CD4-positive, alpha-beta memory T cell (primary cell): ENCODE measurements at regions of chr17 and their contacts with region 1.

Region 1: GRCh38 chr17:29807520-29808351 is 122.3 kb downstream of the SSH2 start:
- DNase-seq: peak; percentile 62 to 72 (median 66)
- H3K4me3 ChIP-seq: no peak overlapping the region
- H3K4me3 Mint-ChIP-seq: peak overlapping the region in 1 of 8 donors; percentile 10
- H3K27ac ChIP-seq: no peak overlapping the region
- H3K27ac Mint-ChIP-seq: peak overlapping the region in 3 of 7 donors; percentile 23 to 67 (median 47)
- H3K4me1 ChIP-seq: peaks cover 16% of the 10 kb centered on the region
- H3K4me1 Mint-ChIP-seq: peaks cover 13 to 23% (median 20%) of the 10 kb centered on the region in 4 donors
- H3K27me3 ChIP-seq: no peaks in the 10 kb centered on the region
- H3K27me3 Mint-ChIP-seq: no peaks in the 10 kb centered on the region

Region 2: GRCh38 chr17:29579866-29580771 is 227.6 kb before region 1 on chr17:
- CTCF ChIA-PET with region 1: interaction called, 15 read pairs
- POLR2A ChIA-PET with region 1: no interaction called
- intact Hi-C with region 1: no loop called
- DNase-seq: peak; percentile 85 to 91 (median 87)
- H3K4me3 ChIP-seq: no peak overlapping the region
- H3K4me3 Mint-ChIP-seq: peak overlapping the region in 2 of 8 donors; percentile 8 to 65
- H3K27ac ChIP-seq: no peak overlapping the region
- H3K27ac Mint-ChIP-seq: peak overlapping the region; percentile 55 to 90 (median 83)
- H3K4me1 ChIP-seq: peaks cover 18% of the 10 kb centered on the region
- H3K4me1 Mint-ChIP-seq: peaks cover 8 to 31% (median 18%) of the 10 kb centered on the region in 4 donors
- H3K27me3 ChIP-seq: no peaks in the 10 kb centered on the region
- H3K27me3 Mint-ChIP-seq: no peaks in the 10 kb centered on the region

Region 3: GRCh38 chr17:29640413-29640812 is 167.3 kb before region 1 on chr17:
- CTCF ChIA-PET with region 1: interaction called, 15 read pairs
- POLR2A ChIA-PET with region 1: no interaction called
- intact Hi-C with region 1: no loop called
- DNase-seq: no peak
- H3K4me3 ChIP-seq: no peak overlapping the region
- H3K4me3 Mint-ChIP-seq: no peak overlapping the region
- H3K27ac ChIP-seq: no peak overlapping the region
- H3K27ac Mint-ChIP-seq: peak overlapping the region in 5 of 7 donors; percentile 60 to 96 (median 75)
- H3K4me1 ChIP-seq: no peaks in the 10 kb centered on the region
- H3K4me1 Mint-ChIP-seq: peaks cover 7 to 19% (median 13%) of the 10 kb centered on the region in 4 donors
- H3K27me3 ChIP-seq: no peaks in the 10 kb centered on the region
- H3K27me3 Mint-ChIP-seq: no peaks in the 10 kb centered on the region

Region 4: DNA sequence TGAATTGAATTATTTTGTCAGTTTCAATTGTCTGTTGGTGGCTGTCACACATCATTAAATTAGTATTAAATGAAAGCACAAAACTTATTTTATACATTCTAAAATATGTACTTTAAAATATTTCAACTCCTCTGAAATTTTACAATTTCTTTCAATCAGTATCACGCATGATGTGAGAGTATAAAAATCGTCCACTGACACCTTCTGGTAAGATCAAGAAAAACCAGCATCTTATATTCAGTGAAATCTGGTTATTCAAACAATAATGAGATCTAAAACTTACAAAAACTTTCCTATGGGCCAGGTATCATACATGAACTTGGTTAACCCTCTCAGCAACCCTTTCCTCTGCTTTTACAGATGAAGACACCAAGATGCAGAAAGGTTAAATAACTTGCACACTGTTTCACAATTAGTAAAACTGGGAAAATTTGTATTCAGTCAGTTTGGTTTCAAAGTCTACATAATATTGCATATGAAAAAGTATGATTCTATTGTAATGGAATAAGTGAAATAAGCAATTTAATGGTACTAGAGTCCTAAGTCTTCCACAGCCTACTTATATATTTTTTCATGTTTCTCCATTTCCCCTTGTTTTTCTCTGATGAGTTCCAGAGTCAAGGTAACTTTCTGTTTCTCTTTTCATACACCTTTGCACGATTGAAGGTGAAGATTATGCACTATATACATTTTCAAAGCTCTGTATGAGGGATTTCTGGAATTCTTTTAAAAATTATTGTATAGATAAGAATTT is 192.4 kb after region 1 on chr17:
- CTCF ChIA-PET with region 1: interaction called, 14 read pairs
- POLR2A ChIA-PET with region 1: interaction called, 3 read pairs
- intact Hi-C with region 1: loop called (anchors 1 kb)
- DNase-seq: peak in 2 of 5 donors; percentile 1 to 2
- H3K4me3 ChIP-seq: no peak overlapping the region
- H3K4me3 Mint-ChIP-seq: peak overlapping the region; percentile 9 to 76 (median 64)
- H3K27ac ChIP-seq: no peak overlapping the region
- H3K27ac Mint-ChIP-seq: peak overlapping the region in 5 of 7 donors; percentile 9 to 92 (median 58)
- H3K4me1 ChIP-seq: peaks cover 5% of the 10 kb centered on the region
- H3K4me1 Mint-ChIP-seq: peaks cover 5 to 11% (median 9%) of the 10 kb centered on the region in 4 donors
- H3K27me3 ChIP-seq: no peaks in the 10 kb centered on the region
- H3K27me3 Mint-ChIP-seq: no peaks in the 10 kb centered on the region

Region 5: DNA sequence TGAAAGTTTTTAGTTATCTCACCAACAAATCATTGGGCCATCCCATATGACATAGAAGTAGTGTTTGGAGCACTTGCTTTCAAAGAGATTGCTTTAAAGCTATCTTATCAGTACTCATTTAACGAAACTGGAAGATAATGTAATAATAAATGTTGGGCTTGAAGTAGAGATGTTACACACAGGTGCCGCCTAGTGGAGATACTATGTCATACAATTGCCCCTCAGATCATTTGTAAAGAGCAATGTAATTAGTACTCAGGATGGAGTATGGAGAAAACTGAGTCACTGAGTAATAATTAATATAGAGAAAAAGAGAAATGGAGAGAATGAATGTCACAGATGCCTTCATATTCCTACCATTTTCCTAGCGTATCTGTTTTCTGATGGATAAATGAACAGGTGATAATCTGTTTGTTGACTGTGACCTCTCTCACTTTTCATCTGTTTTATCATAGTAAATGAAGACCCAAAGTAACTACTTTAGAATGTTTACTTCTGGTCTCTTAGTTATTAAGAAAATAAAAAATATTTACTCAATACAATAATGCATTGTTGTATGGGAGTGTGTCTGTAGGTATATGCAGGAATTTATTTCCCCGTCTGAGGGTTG is 214.1 kb after region 1 on chr17:
- CTCF ChIA-PET with region 1: interaction called, 42 read pairs
- POLR2A ChIA-PET with region 1: no interaction called
- intact Hi-C with region 1: loop called (anchors 1 kb)
- DNase-seq: peak; percentile 25 to 53 (median 48)
- H3K4me3 ChIP-seq: no peak overlapping the region
- H3K4me3 Mint-ChIP-seq: no peak overlapping the region
- H3K27ac ChIP-seq: no peak overlapping the region
- H3K27ac Mint-ChIP-seq: no peak overlapping the region
- H3K4me1 ChIP-seq: no peaks in the 10 kb centered on the region
- H3K4me1 Mint-ChIP-seq: peaks cover 0 to 2% (median under 1%) of the 10 kb centered on the region in 4 donors
- H3K27me3 ChIP-seq: peaks cover 2% of the 10 kb centered on the region
- H3K27me3 Mint-ChIP-seq: peaks cover 0 to 2% of the 10 kb centered on the region in 2 donors

Region 6: DNA sequence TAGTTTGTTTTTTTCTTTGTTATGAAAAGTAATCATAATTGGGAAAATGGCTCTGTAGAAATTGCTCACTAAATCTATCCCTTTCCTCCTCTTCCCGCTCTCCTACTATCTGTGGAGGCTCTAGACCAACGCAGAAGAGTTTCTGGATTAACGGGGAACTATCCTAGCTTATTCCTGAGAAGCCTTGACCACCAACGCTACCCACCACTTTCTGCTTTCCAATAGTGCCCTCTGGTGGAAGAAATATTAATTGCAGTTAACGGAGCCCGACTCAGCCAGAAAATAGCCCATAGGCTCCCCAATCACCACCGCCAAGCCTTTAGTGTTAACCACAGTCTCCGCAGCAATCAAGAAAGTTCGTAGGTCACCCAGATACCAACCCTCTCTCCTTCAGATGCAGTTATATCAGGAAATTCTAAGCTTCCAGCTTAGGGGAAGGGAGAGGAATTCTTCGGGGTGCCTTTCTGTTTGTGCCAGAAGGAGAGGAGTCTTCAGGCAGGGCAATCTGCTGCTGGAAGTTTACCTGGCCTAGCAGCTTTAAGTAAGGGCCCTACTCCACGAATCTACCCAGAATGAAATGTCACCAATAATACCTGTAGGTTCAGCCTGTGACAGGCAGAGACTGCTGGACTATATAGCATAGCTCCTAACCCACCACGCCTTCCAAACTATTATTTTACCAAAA is 285.9 kb after region 1 on chr17:
- CTCF ChIA-PET with region 1: interaction called, 23 read pairs
- POLR2A ChIA-PET with region 1: no interaction called
- intact Hi-C with region 1: loop called (anchors 1 kb)
- DNase-seq: peak; percentile 41 to 66 (median 52)
- H3K4me3 ChIP-seq: no peak overlapping the region
- H3K4me3 Mint-ChIP-seq: peak overlapping the region in 1 of 8 donors; percentile 24
- H3K27ac ChIP-seq: no peak overlapping the region
- H3K27ac Mint-ChIP-seq: no peak overlapping the region
- H3K4me1 ChIP-seq: peaks cover 6% of the 10 kb centered on the region
- H3K4me1 Mint-ChIP-seq: peaks cover 0 to 8% (median 3%) of the 10 kb centered on the region in 4 donors
- H3K27me3 ChIP-seq: no peaks in the 10 kb centered on the region
- H3K27me3 Mint-ChIP-seq: peaks cover 15 to 29% of the 10 kb centered on the region in 2 donors